Activated CD4-positive, alpha-beta memory T cell treated with anti-CD3 and anti-CD28 coated beads for 36 hours (primary cell): ENCODE measurements at regions of chr3 and their contacts with region 1.

Region 1: DNA sequence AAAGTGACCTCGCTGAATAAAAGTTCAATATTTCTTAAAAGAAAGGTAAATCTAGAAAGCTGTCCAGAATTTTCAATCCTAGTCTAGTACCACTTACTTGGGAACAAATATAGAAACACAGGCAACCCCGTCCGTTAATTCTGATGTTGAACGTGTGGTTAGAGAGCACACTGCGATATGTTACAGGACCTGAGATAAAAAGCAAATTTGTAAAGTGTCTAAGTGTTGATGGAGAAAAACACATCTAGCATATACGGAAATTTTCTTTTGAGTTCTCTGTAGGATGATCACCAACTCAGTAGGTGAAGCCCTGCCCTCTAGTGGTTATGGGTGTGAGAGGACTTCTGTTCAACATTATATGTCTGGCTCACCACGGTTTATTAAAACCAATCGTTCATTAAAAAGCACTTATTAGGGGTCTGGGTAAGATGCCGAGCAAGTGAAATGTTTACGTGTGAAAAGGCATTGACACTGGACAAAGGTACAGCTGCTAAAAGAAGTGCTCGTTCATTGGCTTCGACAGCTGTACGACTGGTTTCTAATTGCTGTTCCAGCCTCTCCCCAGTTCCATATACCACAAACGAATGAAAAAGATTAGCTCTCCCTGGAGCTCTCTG is 1.0 kb upstream of the ATP2C1 start:
- DNase-seq: peak; percentile 69
- H3K4me3 Mint-ChIP-seq: peak overlapping the region; percentile 95
- H3K27ac Mint-ChIP-seq: peak overlapping the region; percentile 99
- H3K4me1 Mint-ChIP-seq: peaks cover 36% of the 10 kb centered on the region
- H3K27me3 Mint-ChIP-seq: no peaks in the 10 kb centered on the region

Region 2: GRCh38 chr3:130699765-130700164 is 193.1 kb before region 1 on chr3:
- CTCF ChIA-PET with region 1: interaction called, 5 read pairs
- POLR2A ChIA-PET with region 1: no interaction called
- intact Hi-C with region 1: loop called (anchors 1 kb)
- DNase-seq: no peak
- H3K4me3 Mint-ChIP-seq: no peak overlapping the region
- H3K27ac Mint-ChIP-seq: no peak overlapping the region
- H3K4me1 Mint-ChIP-seq: no peaks in the 10 kb centered on the region
- H3K27me3 Mint-ChIP-seq: no peaks in the 10 kb centered on the region

Region 3: DNA sequence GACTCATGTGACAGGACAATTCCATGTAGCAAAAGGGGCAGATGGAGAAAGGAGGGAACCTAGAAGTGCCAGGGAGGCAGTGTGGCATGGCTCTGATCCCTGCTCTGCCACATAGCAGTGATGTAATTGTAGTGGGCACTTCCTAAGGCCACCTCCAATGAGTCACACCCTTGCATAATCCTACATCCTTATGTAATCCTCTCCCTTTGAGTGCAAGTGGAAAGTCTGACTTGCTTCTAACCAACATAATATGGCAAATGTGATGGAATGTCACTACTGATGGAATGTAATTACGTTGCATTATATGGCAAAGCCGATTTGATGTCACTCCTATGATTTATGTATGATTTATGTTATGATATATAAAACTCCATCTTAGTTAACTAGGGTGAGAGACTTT is 71.9 kb before region 1 on chr3:
- CTCF ChIA-PET with region 1: no interaction called
- POLR2A ChIA-PET with region 1: no interaction called
- intact Hi-C with region 1: no loop called
- DNase-seq: no peak
- H3K4me3 Mint-ChIP-seq: no peak overlapping the region
- H3K27ac Mint-ChIP-seq: no peak overlapping the region
- H3K4me1 Mint-ChIP-seq: no peaks in the 10 kb centered on the region
- H3K27me3 Mint-ChIP-seq: peaks cover 3% of the 10 kb centered on the region

Region 4: DNA sequence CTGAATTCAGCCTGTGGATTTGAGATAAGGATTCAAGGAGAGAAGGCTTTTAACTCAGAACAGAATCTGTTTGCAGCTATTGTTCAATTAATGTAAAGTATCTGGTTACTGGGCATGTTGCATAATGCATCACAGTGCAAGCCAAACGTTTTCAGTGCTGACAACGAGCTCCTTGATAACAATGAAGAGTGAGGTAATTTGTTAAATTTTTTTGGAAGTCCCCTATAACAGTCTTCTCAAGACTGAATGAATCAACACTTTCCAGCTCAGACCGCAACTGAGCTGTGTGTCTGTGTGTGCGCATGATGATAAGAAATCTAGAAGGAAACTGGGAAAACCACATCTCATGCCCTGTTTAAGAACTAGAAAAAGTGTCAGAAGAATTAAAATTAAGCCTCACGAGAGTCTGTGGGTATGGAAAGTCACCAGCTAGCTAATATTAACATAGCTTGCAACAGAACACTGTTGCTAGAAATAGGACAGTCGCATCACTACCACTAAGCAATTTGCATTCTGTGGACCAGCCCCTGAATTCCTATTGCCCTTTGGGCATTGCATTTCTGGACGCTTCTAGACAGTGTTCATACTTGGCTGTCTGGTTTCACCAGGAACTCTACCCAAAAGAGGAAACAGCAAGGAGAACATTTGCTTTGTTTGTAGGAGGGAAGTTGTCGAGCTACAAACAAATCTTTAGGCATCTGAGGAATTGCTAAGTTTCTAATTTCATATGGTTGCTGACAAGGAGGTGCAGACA is 42.6 kb before region 1 on chr3:
- CTCF ChIA-PET with region 1: interaction called, 31 read pairs
- POLR2A ChIA-PET with region 1: interaction called, 28 read pairs
- intact Hi-C with region 1: loop called (anchors 1 kb)
- DNase-seq: peak; percentile 76
- H3K4me3 Mint-ChIP-seq: peak overlapping the region; percentile 21
- H3K27ac Mint-ChIP-seq: peak overlapping the region; percentile 57
- H3K4me1 Mint-ChIP-seq: peaks cover 28% of the 10 kb centered on the region
- H3K27me3 Mint-ChIP-seq: peaks cover 36% of the 10 kb centered on the region

Region 5: DNA sequence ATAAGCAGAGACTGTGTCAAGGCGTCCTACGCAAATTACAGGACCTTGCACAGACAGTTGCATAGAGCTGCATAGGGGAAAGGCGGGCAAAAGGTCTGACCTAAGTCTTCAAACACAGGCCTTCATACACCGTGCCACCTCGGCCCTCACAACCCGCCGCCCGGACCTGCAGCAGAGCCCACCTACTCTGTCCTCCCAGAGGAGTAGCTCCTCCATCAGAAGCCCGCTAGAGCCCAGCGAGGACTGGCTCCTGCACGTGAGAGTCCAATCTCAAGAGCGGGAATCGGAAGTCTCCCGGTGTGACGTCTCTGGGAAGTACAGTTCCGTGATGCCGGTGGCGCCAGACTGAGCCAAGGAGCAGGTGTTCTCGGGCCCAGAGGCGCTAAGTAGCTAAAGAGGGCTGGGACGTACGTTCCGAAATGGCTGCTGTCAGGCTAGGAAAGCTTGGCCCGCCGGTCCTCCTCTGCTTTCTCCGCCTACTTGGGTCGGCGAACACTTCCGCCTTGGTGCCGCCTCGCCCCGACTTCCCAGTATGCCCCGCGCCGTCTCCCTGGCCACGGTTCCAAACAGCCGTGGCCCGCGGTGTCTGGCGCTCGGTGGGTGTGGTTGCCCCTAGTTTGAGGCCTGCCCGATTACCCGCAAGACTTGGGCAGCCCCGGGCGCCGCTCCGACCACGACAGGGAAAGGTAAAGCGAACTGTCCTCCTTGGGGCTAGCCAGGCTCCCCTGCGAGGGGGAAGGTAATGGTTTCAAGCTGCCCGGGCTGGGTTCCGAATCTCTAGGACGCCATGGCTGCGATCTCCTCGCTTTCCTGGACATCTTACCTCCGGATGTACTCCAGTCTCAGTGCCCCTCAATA is 133.7 kb after region 1 on chr3 and contains the starts of genes ASTE1 and NEK11:
- CTCF ChIA-PET with region 1: interaction called, 9 read pairs
- POLR2A ChIA-PET with region 1: interaction called, 12 read pairs
- intact Hi-C with region 1: loop called (anchors 1 kb)
- DNase-seq: peak; percentile 94
- H3K4me3 Mint-ChIP-seq: peak within 1 kb of the TSS; percentile 84
- H3K27ac Mint-ChIP-seq: peak within 1 kb of the TSS; percentile 90
- H3K4me1 Mint-ChIP-seq: peaks cover 41% of the 10 kb centered on the region
- H3K27me3 Mint-ChIP-seq: no peaks in the 10 kb centered on the region
- total RNA-seq, gene ASTE1: 7.8 to 10.1 TPM
- total RNA-seq, gene NEK11: 1.2 to 1.3 TPM

Region 6: GRCh38 chr3:131125684-131126083 is 232.8 kb after region 1 on chr3:
- CTCF ChIA-PET with region 1: no interaction called
- POLR2A ChIA-PET with region 1: no interaction called
- intact Hi-C with region 1: no loop called
- DNase-seq: no peak
- H3K4me3 Mint-ChIP-seq: no peak overlapping the region
- H3K27ac Mint-ChIP-seq: no peak overlapping the region
- H3K4me1 Mint-ChIP-seq: no peaks in the 10 kb centered on the region
- H3K27me3 Mint-ChIP-seq: no peaks in the 10 kb centered on the region

Region 7: GRCh38 chr3:131242201-131242600 is 349.3 kb after region 1 on chr3:
- CTCF ChIA-PET with region 1: no interaction called
- POLR2A ChIA-PET with region 1: no interaction called
- intact Hi-C with region 1: no loop called
- DNase-seq: no peak
- H3K4me3 Mint-ChIP-seq: no peak overlapping the region
- H3K27ac Mint-ChIP-seq: no peak overlapping the region
- H3K4me1 Mint-ChIP-seq: no peaks in the 10 kb centered on the region
- H3K27me3 Mint-ChIP-seq: no peaks in the 10 kb centered on the region

Region 8: GRCh38 chr3:131502530-131503245 is 609.8 kb after region 1 on chr3 and contains the start of gene MRPL3:
- CTCF ChIA-PET with region 1: no interaction called
- POLR2A ChIA-PET with region 1: no interaction called
- intact Hi-C with region 1: loop called (anchors 5 kb)
- DNase-seq: peak; percentile 91
- H3K4me3 Mint-ChIP-seq: peak within 1 kb of the TSS; percentile 99
- H3K27ac Mint-ChIP-seq: peak within 1 kb of the TSS; percentile 90
- H3K4me1 Mint-ChIP-seq: peaks cover 32% of the 10 kb centered on the region
- H3K27me3 Mint-ChIP-seq: no peaks in the 10 kb centered on the region
- total RNA-seq, gene MRPL3: 145 to 146 TPM